IMR-90 (cell line): ENCODE measurements at regions of chr15 and their contacts with region 1.

Region 1: DNA sequence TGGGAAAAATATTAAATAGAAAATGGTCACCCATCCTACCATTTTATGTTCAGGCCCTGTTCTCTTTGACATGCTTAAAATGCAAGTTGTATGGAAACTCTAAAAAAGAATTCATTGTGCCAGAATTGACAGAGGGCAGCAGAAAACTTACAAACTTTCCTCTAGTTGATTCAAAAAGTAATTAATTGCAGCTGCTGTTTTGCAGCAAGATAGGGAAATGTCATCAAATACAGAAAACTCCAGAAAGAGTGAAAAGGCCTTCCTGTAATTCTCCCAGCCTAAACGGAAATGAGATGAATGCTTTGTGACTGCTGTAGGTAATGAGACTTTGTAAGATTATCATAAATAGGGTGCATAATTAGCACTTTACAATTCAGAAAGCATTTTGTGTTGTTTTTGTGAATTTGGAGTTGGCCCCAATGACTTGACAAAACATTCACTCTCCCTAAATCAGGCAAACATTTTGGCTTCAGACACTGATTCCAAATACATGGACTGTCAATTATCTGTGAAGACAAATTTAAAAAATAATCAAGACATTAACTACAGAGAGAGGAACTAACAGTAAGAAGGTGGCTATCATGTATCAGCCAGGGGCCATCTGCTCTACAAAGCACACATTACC is 861.8 kb downstream of the SQOR start:
- DNase-seq: no peak
- ATAC-seq: no peak
- H3K4me3 ChIP-seq: no peak overlapping the region
- H3K27ac ChIP-seq: no peak overlapping the region
- H3K4me1 ChIP-seq: no peaks in the 10 kb centered on the region
- H3K27me3 ChIP-seq: no peaks in the 10 kb centered on the region
- CTCF ChIP-seq: no peak
- POLR2A ChIP-seq: no peak
- RAD21 ChIP-seq: no peak

Region 2: DNA sequence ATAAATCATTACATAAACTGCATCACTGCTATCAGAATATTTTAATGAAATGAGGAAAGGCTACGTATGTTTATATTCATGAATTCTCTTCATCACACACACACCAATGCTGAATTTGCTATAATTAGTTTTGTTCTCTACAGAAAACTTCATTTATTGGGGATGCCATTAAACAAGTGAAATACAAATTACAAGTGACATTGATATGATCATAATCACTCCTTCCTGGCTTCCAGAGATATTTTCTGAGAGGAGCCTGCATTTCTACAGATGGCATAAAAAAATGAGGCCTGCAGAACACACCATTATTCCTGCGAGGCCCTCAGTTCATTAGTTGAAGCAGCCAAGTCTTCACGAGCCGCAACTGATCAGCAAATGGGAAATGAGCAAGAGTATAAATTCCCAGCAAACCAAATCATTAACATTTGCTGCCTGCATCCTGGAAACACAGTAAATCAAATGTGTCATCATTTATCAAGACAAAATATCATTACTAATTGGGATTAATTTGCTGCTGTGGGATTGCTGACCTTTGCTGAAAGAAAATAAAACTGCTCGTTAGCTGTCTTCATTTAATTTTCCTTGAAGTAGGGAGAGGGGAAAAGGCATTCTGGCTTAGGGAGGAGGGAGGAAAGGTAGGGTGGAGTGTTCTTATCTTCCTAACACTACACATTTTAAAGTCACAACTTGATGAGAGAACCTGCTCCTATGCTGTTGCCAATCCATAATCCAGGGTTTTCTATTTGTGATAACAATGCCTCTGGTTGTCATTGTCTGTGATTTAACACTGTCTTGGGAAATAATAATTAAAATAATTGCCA is 60.2 kb after region 1 on chr15:
- CTCF ChIA-PET with region 1: no interaction called
- POLR2A ChIA-PET with region 1: no interaction called
- dilution Hi-C with region 1: no loop called
- in situ Hi-C with region 1: loop called (anchors 10 kb)
- intact Hi-C with region 1: no loop called
- DNase-seq: no peak
- ATAC-seq: no peak
- H3K4me3 ChIP-seq: no peak overlapping the region
- H3K27ac ChIP-seq: no peak overlapping the region
- H3K4me1 ChIP-seq: no peaks in the 10 kb centered on the region
- H3K27me3 ChIP-seq: no peaks in the 10 kb centered on the region
- CTCF ChIP-seq: no peak
- POLR2A ChIP-seq: no peak
- RAD21 ChIP-seq: no peak

Region 3: GRCh38 chr15:46576646-46577395 is 80.2 kb after region 1 on chr15:
- CTCF ChIA-PET with region 1: no interaction called
- POLR2A ChIA-PET with region 1: no interaction called
- dilution Hi-C with region 1: no loop called
- in situ Hi-C with region 1: no loop called
- intact Hi-C with region 1: no loop called
- DNase-seq: no peak
- ATAC-seq: no peak
- H3K4me3 ChIP-seq: no peak overlapping the region
- H3K27ac ChIP-seq: no peak overlapping the region
- H3K4me1 ChIP-seq: no peaks in the 10 kb centered on the region
- H3K27me3 ChIP-seq: no peaks in the 10 kb centered on the region
- CTCF ChIP-seq: no peak
- POLR2A ChIP-seq: no peak
- RAD21 ChIP-seq: no peak